WTC11 (cell line): ENCODE measurements at regions of chrX and their contacts with region 1.

Region 1: GRCh38 chrX:96182366-96182765 is 502.3 kb upstream of the DIAPH2 start:
- DNase-seq: peak; percentile 44
- ATAC-seq: peak; percentile 90
- H3K4me3 Mint-ChIP-seq: no peak overlapping the region
- H3K27ac Mint-ChIP-seq: no peak overlapping the region
- H3K4me1 Mint-ChIP-seq: peaks cover 28% of the 10 kb centered on the region
- H3K27me3 Mint-ChIP-seq: no peaks in the 10 kb centered on the region
- CTCF ChIP-seq: 0 out of 2 replicates have a peak, but pooled peaks have one; percentile 35

Region 2: GRCh38 chrX:95764972-95765451 is 417.4 kb before region 1 on chrX:
- CTCF ChIA-PET with region 1: interaction called, 37 read pairs
- POLR2A ChIA-PET with region 1: no interaction called
- DNase-seq: no peak
- ATAC-seq: peak; percentile 93
- H3K4me3 Mint-ChIP-seq: peak overlapping the region; percentile 52
- H3K27ac Mint-ChIP-seq: peak overlapping the region; percentile 70; the same call in 1 of the 2 replicates
- H3K4me1 Mint-ChIP-seq: peaks cover 22% of the 10 kb centered on the region
- H3K27me3 Mint-ChIP-seq: no peaks in the 10 kb centered on the region
- CTCF ChIP-seq: 0 out of 2 replicates have a peak, but pooled peaks have one; percentile 18

Region 3: GRCh38 chrX:95903490-95903889 is 278.9 kb before region 1 on chrX:
- CTCF ChIA-PET with region 1: interaction called, 17 read pairs
- POLR2A ChIA-PET with region 1: no interaction called
- DNase-seq: no peak
- ATAC-seq: peak; percentile 92
- H3K4me3 Mint-ChIP-seq: no peak overlapping the region
- H3K27ac Mint-ChIP-seq: no peak overlapping the region
- H3K4me1 Mint-ChIP-seq: peaks cover 14% of the 10 kb centered on the region
- H3K27me3 Mint-ChIP-seq: no peaks in the 10 kb centered on the region
- CTCF ChIP-seq: no peak

Region 4: GRCh38 chrX:96147681-96148080 is 34.7 kb before region 1 on chrX:
- CTCF ChIA-PET with region 1: no interaction called
- POLR2A ChIA-PET with region 1: no interaction called
- DNase-seq: no peak
- ATAC-seq: no peak
- H3K4me3 Mint-ChIP-seq: no peak overlapping the region
- H3K27ac Mint-ChIP-seq: no peak overlapping the region
- H3K4me1 Mint-ChIP-seq: no peaks in the 10 kb centered on the region
- H3K27me3 Mint-ChIP-seq: no peaks in the 10 kb centered on the region
- CTCF ChIP-seq: no peak

Region 5: DNA sequence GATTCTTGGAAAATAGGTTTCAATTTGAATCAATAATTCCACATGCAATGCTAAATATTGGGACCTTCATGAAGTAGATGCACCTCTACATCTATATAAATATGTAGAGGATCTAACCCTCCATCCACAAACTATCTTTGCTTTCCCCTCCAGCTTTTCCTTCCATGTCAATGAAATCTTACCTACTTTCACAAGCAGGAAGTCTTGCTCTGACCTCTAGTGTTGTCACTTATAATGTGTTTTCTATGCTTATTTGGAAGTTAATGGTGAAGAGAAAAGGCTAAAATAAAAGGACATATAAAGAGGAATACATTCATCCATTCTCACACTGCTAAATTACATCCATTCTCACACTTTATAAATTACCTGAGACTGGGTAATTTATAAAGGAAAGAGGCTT is 29.6 kb after region 1 on chrX:
- CTCF ChIA-PET with region 1: no interaction called
- POLR2A ChIA-PET with region 1: no interaction called
- DNase-seq: no peak
- ATAC-seq: no peak
- H3K4me3 Mint-ChIP-seq: no peak overlapping the region
- H3K27ac Mint-ChIP-seq: no peak overlapping the region
- H3K4me1 Mint-ChIP-seq: no peaks in the 10 kb centered on the region
- H3K27me3 Mint-ChIP-seq: no peaks in the 10 kb centered on the region; the same call in 1 of the 2 replicates
- CTCF ChIP-seq: no peak